ENCODE measurements at regions of chr7 and their contacts with region 1.

Region 1: GRCh38 chr7:151101621-151102396 is 15.5 kb downstream of the AGAP3 start:
- DNase-seq: no peak
- H3K4me3 ChIP-seq: no peak overlapping the region
- H3K27ac ChIP-seq: no peak overlapping the region
- H3K27me3 ChIP-seq: no peaks in the 10 kb centered on the region
- CTCF ChIP-seq: no peak

Region 2: DNA sequence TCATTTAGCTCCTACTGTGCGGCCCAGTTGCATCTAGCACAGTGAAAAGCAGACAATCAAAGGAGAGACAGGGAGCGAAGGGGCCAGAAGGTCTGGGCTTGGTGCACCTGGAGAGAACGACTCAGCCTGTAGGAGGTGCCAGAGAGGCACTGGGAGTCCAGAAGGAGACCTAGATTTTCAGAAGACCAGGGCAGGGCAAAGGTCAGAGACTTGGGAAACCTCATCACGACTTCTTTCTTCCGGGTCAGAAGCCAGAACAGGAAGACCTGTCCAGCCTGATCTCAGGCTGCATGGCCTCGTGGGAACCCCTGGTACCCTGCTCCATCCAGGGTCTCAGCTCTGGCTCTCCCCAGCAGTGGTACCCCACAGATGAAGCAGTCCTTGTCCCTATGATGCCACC is 10.4 kb before region 1 on chr7:
- CTCF ChIA-PET with region 1: interaction called, 13 read pairs
- POLR2A ChIA-PET with region 1: interaction called, 8 read pairs
- DNase-seq: no peak
- H3K4me3 ChIP-seq: no peak overlapping the region
- H3K27ac ChIP-seq: no peak overlapping the region
- H3K27me3 ChIP-seq: no peaks in the 10 kb centered on the region
- CTCF ChIP-seq: peak; percentile 56

Region 3: DNA sequence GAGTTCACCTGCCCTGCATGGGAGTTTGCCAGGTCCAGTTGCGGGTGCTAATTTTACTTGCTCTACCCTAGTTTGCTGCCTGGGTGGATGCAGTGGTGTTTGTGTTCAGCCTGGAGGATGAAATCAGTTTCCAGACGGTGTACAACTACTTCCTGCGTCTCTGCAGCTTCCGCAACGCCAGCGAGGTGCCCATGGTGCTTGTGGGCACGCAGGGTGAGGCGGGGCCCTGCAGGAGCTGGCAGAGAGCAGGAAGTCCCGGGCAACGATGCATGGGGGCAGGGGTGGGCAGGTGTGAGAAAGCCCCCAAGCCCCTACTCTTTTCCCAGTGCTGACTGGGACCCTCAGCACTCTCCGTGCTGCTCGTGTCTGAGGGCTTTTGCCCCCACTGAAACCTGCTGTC is 15.8 kb after region 1 on chr7:
- CTCF ChIA-PET with region 1: no interaction called
- POLR2A ChIA-PET with region 1: no interaction called
- DNase-seq: no peak
- H3K4me3 ChIP-seq: no peak overlapping the region
- H3K27ac ChIP-seq: no peak overlapping the region
- H3K27me3 ChIP-seq: no peaks in the 10 kb centered on the region
- CTCF ChIP-seq: no peak